ENCODE measurements at regions of chr5 and their contacts with region 1.

Region 1: GRCh38 chr5:122030251-122030650 is 47.8 kb downstream of the LOX start:
- DNase-seq: peak; percentile 69 to 71
- H3K4me3 ChIP-seq: no peak overlapping the region
- H3K4me3 Mint-ChIP-seq: no peak overlapping the region
- H3K27ac Mint-ChIP-seq: peak overlapping the region; percentile 29
- H3K4me1 ChIP-seq: peaks cover 40% of the 10 kb centered on the region
- H3K4me1 Mint-ChIP-seq: peaks cover 34% of the 10 kb centered on the region
- H3K27me3 ChIP-seq: no peaks in the 10 kb centered on the region
- H3K27me3 Mint-ChIP-seq: no peaks in the 10 kb centered on the region
- CTCF ChIP-seq: peak; percentile 27 to 68

Region 2: DNA sequence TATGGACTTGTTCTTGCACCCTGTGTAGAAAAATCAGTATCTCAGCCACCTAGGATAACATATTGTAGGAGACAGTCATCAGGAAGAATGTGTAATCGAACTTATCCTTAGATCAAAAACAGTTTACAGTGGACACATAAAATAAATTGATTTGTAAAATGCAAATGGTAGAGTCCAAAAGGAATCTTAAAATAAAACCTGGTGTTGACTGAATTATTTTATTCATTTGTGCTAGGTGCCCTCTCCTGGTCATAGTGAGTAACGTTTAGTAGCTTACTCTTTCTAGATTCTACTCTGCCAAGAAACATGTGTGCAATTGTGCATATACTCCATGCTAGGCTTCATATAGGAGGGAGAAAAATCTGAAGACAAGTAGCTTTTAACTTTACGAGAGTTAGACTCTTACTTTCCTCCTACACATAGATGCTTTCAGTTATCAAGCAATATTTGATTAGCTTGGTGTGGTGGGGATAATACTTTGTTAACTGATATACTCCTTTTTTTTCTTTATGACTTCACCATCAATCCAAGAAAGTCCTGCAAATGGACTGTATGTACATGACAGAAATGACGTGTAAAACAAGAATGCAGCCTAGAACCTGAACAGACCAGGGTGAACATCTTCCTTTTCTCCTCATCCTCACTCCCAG is 71.5 kb after region 1 on chr5:
- CTCF ChIA-PET with region 1: interaction called, 10 read pairs
- POLR2A ChIA-PET with region 1: no interaction called
- intact Hi-C with region 1: loop called (anchors 1 kb)
- DNase-seq: peak in 1 of 2 experiments; percentile 22
- H3K4me3 ChIP-seq: no peak overlapping the region
- H3K4me3 Mint-ChIP-seq: no peak overlapping the region
- H3K27ac Mint-ChIP-seq: no peak overlapping the region
- H3K4me1 ChIP-seq: no peaks in the 10 kb centered on the region
- H3K4me1 Mint-ChIP-seq: no peaks in the 10 kb centered on the region
- H3K27me3 ChIP-seq: no peaks in the 10 kb centered on the region
- H3K27me3 Mint-ChIP-seq: peaks cover 3% of the 10 kb centered on the region
- CTCF ChIP-seq: peak; percentile 51 to 64

Measured in Caco-2 (cell line).